Activated T-helper 1 cell treated with anti-CD3 and anti-CD28 coated beads, Interleukin-12 subunit alpha, Interleukin-12 subunit beta, Interleukin-2, Interleukin-4 antibody, amounts not matched to agents 30 ng/mL and 10 ng/mL and 1 ng/mL, durations not matched to agents 14 hours and 24 hours and 36 hours (primary cell): ENCODE measurements at regions of chr20 and their contacts with region 1.

Region 1: GRCh38 chr20:37270576-37271420 is 9.2 kb upstream of the GHRH start:
- DNase-seq: no peak
- H3K4me3 Mint-ChIP-seq: no peak overlapping the region
- H3K27ac Mint-ChIP-seq: no peak overlapping the region
- H3K4me1 Mint-ChIP-seq: peaks cover 5% of the 10 kb centered on the region
- H3K27me3 Mint-ChIP-seq: no peaks in the 10 kb centered on the region

Region 2: DNA sequence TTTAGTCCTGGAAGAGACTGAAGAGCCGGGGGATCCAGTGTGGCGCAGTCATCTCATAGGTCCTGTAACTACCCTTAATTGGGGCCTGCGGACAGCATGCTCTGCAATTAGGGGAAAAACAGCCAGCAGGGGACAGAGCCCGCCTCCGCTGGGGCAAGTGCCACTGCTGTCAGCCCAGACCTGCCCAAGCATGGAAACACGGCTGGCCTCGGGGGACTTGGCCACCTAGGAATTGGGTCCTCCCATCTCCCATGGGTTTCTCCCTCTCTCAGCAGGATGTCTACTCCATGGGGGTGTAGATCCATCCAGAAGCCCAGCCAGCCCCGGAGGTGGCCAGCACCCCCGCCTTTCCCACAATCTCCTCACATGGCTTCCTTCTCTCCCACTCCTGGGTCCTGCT is 12.8 kb before region 1 on chr20:
- intact Hi-C with region 1: no loop called
- DNase-seq: no peak
- H3K4me3 Mint-ChIP-seq: no peak overlapping the region
- H3K27ac Mint-ChIP-seq: no peak overlapping the region
- H3K4me1 Mint-ChIP-seq: no peaks in the 10 kb centered on the region
- H3K27me3 Mint-ChIP-seq: peaks cover 11% of the 10 kb centered on the region

Region 3: GRCh38 chr20:37336369-37337207 is 65.8 kb after region 1 on chr20:
- intact Hi-C with region 1: loop called (anchors 1 kb)
- DNase-seq: peak; percentile 8
- H3K4me3 Mint-ChIP-seq: peak overlapping the region; percentile 61
- H3K27ac Mint-ChIP-seq: peak overlapping the region; percentile 55
- H3K4me1 Mint-ChIP-seq: peaks cover 22% of the 10 kb centered on the region
- H3K27me3 Mint-ChIP-seq: no peaks in the 10 kb centered on the region

Region 4: GRCh38 chr20:37384683-37385174 is 113.9 kb after region 1 on chr20:
- intact Hi-C with region 1: loop called (anchors 1 kb)
- DNase-seq: peak; percentile 78
- H3K4me3 Mint-ChIP-seq: peak overlapping the region; percentile 84
- H3K27ac Mint-ChIP-seq: no peak overlapping the region
- H3K4me1 Mint-ChIP-seq: peaks cover 6% of the 10 kb centered on the region
- H3K27me3 Mint-ChIP-seq: peaks cover 9% of the 10 kb centered on the region